ENCODE measurements at regions of chr7 and their contacts with region 1.

Region 1: GRCh38 chr7:101138213-101138870 is 11.4 kb downstream of the SERPINE1 start:
- DNase-seq: peak; percentile 89 to 93
- H3K4me3 ChIP-seq: peak overlapping the region; percentile 11; the same call in 1 of the 2 replicates
- H3K27ac ChIP-seq: peak overlapping the region; percentile 91
- H3K4me1 ChIP-seq: peaks cover 53% of the 10 kb centered on the region
- H3K27me3 ChIP-seq: no peaks in the 10 kb centered on the region
- CTCF ChIP-seq: peak; percentile 98

Region 2: DNA sequence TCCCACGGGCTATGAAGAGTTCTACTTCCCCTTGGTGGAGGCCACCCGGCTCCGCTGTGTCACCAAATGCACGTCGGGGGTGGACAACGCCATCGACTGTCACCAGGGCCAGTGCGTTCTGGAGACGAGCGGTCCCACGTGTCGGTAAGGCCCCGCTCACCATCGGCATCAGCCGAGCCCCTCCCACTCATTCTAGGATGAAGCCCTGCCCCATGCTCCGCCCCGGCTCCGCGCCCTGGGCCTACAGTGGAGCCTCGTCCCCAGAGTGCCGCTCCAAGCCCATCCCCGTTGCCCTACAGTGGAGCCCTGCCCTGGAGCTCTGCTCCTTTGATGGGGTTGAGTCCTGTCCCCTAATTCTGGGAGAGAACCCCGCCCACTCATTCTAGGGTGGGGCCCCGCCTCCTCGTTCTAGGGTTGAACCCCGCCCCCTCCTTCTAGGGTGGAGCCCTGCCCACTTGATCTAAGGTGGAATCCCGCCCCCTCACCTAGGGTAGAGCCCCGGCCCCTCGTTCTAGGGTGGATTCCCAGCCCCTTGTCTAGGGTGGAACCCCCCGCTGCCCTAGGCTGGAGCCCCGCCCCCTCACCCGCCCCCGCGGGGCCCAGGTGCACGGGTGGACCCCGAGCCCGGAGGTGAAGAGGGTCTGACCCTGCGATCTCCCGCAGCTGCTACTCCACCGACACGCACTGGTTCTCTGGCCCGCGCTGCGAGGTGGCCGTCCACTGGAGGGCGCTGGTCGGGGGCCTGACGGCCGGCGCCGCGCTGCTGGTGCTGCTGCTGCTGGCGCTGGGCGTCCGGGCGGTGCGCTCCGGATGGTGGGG is 172.4 kb before region 1 on chr7:
- CTCF ChIA-PET with region 1: no interaction called
- POLR2A ChIA-PET with region 1: no interaction called
- intact Hi-C with region 1: loop called (anchors 5 kb)
- DNase-seq: peak in 1 of 2 experiments; percentile 92
- H3K4me3 ChIP-seq: no peak overlapping the region
- H3K27ac ChIP-seq: no peak overlapping the region
- H3K4me1 ChIP-seq: no peaks in the 10 kb centered on the region
- H3K27me3 ChIP-seq: peaks cover 86% of the 10 kb centered on the region
- CTCF ChIP-seq: peak; percentile 46

Region 3: DNA sequence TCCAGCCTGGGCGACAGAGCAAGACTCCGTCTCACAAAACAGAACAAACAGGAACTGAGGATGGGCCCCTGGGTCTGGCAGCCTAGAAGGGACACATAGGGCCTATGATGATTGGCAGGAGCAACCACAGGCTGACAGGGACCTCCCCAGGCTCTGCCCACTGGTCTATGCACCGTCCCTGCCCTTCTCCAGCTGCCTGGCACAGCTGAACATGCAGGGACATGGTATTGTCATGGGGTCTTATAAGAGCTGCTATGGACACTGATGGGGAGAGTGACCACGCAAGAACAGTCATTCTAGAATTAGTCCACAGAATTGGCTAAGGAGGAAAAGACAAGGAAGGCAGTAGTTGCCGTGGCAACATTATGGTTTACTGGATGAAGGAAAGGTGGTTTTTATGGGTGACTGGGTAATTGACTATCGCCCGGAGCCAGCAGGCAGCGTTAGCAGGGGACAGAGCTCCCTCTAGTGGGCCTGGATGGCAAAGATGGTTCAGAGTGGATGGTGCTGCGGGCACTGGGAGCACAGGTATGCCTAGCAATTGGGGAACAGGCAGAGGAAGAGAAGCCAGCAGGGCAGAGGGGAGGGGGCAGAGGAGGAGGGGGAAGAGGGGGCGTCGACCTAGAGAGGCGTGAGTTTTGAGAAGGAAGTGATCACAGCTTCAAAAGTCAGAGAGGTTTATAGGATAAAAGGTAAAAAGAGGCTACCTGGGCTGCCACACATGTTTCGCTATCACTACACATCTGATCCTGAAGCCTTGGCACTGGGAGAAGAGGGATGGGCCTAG is 60.8 kb before region 1 on chr7:
- CTCF ChIA-PET with region 1: interaction called, 15 read pairs
- POLR2A ChIA-PET with region 1: no interaction called
- intact Hi-C with region 1: loop called (anchors 1 kb)
- DNase-seq: peak; percentile 86 to 96
- H3K4me3 ChIP-seq: no peak overlapping the region
- H3K27ac ChIP-seq: no peak overlapping the region
- H3K4me1 ChIP-seq: peaks cover 25% of the 10 kb centered on the region
- H3K27me3 ChIP-seq: no peaks in the 10 kb centered on the region
- CTCF ChIP-seq: peak; percentile 92

Region 4: GRCh38 chr7:101099969-101100781 is 38.2 kb before region 1 on chr7:
- CTCF ChIA-PET with region 1: interaction called, 12 read pairs
- POLR2A ChIA-PET with region 1: no interaction called
- intact Hi-C with region 1: loop called (anchors 1 kb)
- DNase-seq: peak; percentile 95 to 98
- H3K4me3 ChIP-seq: peak overlapping the region; percentile 43; the same call in 1 of the 2 replicates
- H3K27ac ChIP-seq: peak overlapping the region; percentile 93
- H3K4me1 ChIP-seq: peaks cover 53% of the 10 kb centered on the region
- H3K27me3 ChIP-seq: no peaks in the 10 kb centered on the region
- CTCF ChIP-seq: no peak

Region 5: GRCh38 chr7:101287032-101287431 is 148.7 kb after region 1 on chr7:
- CTCF ChIA-PET with region 1: interaction called, 12 read pairs
- POLR2A ChIA-PET with region 1: no interaction called
- intact Hi-C with region 1: no loop called
- DNase-seq: no peak
- H3K4me3 ChIP-seq: no peak overlapping the region
- H3K27ac ChIP-seq: no peak overlapping the region
- H3K4me1 ChIP-seq: no peaks in the 10 kb centered on the region
- H3K27me3 ChIP-seq: peaks cover 18% of the 10 kb centered on the region
- CTCF ChIP-seq: no peak

Measured in PC-9 (cell line).